Left cardiac atrium (tissue), 4 donors: ENCODE measurements at regions of chr2 and their contacts with region 1.

Region 1: DNA sequence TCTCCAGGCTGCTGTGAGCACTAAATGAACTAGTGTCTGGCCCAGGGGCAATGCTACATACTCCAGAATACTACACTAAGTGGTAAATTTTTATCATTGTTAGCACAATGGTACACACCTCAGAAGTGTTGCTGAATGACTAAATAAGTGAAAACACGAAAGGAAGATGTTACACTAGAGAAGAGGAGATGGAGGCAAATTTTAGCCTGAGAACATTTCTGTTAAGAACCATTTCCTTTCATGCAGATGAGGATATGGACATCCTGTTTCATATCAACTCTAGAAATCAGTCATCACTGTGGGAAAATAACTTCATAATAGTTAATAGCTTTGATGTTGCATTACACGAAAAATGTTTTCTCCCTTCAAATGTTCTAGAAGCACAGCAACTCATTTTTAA is 117.6 kb upstream of the STK17B start:
- DNase-seq: no peak
- ATAC-seq: no peak

Region 2: DNA sequence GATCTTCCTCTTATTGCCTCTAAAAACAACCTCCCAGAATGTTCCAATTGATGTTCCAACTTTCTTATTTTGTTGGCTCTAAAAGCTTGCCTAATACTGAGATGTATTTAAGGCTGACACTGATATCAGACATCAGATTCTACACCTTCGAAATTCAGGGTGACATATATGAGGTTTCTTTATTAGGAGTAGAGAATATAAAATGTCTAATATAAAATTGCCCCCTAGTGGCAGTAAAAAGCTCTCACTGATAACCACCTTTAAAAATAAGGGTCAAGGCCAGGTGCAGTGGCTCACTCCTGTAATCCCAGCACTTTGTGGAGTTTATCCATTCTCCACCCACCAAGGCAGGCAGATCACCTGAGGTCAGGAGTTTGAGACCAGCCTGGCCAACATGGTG is 1421.7 kb before region 1 on chr2:
- intact Hi-C with region 1: no loop called
- DNase-seq: no peak
- ATAC-seq: no peak

Region 3: DNA sequence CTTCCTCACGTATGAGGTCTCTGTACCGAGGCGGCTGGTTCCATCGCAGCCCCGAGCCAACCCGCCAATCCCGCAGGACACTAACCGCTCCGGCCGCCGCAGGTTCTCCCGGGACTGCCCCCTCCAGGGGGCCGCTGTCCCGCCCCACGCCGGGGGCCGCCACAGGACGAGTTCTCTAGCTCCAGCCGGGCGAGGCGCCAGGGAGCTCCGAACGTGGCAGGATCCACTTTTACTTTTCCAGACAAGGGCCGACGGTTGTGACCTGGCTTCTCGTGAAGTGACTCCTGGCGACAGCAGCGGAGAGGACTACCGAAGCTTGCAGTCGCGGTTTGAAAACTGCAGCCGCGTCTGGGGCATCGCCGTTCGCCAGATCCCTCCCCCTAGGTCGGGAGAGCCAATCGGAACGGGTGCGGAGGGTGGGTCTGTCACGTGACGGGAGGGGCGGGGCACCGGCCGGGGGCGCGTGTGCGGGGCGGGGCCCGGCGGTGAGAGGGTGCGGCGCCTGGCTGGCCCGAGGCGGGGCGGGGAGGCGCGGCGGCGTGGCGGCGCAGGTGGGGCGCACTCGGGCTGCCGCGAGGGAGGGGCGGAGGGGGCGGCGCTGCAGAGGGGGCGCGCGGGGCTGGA is 117.6 kb before region 1 on chr2 and contains the start of gene STK17B:
- intact Hi-C with region 1: loop called in 1 of 2 experiments (anchors 10 kb)
- DNase-seq: peak; percentile 95
- ATAC-seq: peak; percentile 97 to 98
- total RNA-seq, gene STK17B: 11.2 to 11.5 TPM